ENCODE measurements at regions of chr20 and their contacts with region 1.

Region 1: GRCh38 chr20:2172305-2173175 is 70.9 kb downstream of the STK35 start:
- DNase-seq: peak; percentile 62
- H3K4me3 Mint-ChIP-seq: no peak overlapping the region
- H3K27ac Mint-ChIP-seq: no peak overlapping the region
- H3K4me1 Mint-ChIP-seq: peaks cover 6% of the 10 kb centered on the region
- H3K27me3 Mint-ChIP-seq: peaks cover 62% of the 10 kb centered on the region
- CTCF ChIP-seq: peak; percentile 95

Region 2: DNA sequence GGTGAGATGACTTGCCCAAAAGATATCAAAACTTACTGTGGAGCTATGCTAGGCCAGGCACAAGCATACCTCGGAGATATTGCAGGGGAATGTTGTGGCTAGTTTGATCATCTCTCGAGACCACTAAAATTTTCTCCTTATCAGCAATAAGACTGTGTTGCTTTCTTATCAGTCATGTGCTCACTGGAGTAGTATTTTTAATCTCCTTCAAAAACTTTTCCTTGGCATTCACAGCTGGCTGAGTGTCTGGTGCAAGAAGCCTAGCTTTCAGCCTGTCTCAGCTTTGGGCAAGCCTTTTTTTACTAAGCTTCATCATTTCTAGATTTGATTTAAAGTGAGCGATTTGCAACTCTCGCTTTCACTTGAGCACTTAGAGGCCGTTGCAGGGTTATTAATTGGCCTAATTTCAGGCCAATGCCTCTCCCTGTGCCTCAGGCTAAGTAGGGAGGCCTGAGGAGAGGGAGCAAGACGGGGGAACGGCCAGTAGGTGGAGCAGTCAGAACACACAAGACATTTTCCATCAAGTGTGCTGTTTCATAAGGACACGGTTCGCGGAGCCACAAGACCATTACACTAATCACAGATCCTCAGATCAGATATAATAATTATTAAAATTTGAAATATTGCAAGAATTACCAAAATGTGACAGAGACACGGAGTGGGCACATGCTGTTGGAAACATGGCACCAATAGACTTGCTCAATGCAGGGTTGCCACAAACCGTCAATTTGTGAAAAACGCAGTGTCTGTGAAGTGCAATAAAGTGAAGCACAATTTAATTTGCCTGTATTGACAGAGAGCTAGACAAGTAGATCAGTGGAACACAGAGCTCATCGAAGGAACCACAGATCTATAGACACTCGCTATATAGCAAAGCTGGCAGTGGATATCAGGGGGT is 408.2 kb before region 1 on chr20:
- CTCF ChIA-PET with region 1: interaction called, 35 read pairs
- POLR2A ChIA-PET with region 1: interaction called, 3 read pairs
- intact Hi-C with region 1: loop called (anchors 2 kb)
- DNase-seq: peak; percentile 84
- H3K4me3 Mint-ChIP-seq: no peak overlapping the region
- H3K27ac Mint-ChIP-seq: no peak overlapping the region
- H3K4me1 Mint-ChIP-seq: peaks cover 10% of the 10 kb centered on the region
- H3K27me3 Mint-ChIP-seq: no peaks in the 10 kb centered on the region
- CTCF ChIP-seq: peak; percentile 54

Region 3: DNA sequence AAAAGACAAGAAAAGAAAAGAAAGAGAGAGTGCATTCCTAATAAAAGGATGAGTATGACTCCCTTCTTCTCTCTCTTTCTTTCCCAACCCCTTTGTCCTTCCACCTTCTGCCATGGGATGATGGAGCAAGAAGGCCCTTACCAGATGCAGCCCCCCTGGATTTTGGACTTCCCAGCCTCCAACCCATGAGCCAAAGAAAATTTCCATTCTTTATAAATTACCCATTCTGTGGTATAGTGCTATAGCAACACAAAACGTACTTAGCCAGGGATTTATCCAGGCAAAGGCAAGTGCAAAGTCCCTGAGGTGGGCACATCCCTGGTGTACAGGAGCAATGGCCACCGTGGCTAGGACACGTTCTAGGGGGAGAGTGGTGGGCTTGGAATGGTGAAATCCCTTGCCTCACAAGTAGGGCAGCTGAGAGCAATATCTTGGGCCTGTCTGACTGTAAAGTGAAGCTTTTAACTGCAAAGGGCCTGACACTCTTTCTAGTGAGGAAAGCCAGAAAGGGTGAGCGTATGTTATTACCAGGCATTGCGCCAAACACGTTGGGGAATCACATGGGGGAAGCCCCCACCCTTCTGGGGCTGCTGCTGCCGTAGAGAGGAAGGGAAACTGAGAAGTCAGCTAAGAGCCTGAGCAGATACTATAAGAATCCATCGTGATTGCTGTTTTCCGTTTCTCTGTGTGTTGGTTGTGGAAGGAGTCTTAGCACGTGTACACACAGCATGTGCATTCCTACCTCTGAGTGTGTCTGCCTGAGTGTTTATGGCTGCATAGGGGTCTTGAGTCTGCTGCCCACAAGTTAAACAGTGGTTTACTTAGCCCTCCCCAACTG is 328.0 kb before region 1 on chr20:
- CTCF ChIA-PET with region 1: no interaction called
- POLR2A ChIA-PET with region 1: no interaction called
- intact Hi-C with region 1: no loop called
- DNase-seq: peak; percentile 5
- H3K4me3 Mint-ChIP-seq: no peak overlapping the region
- H3K27ac Mint-ChIP-seq: no peak overlapping the region
- H3K4me1 Mint-ChIP-seq: no peaks in the 10 kb centered on the region
- H3K27me3 Mint-ChIP-seq: no peaks in the 10 kb centered on the region
- CTCF ChIP-seq: no peak

Region 4: GRCh38 chr20:1870792-1871550 is 301.6 kb before region 1 on chr20:
- CTCF ChIA-PET with region 1: no interaction called
- POLR2A ChIA-PET with region 1: no interaction called
- intact Hi-C with region 1: no loop called
- DNase-seq: no peak
- H3K4me3 Mint-ChIP-seq: no peak overlapping the region
- H3K27ac Mint-ChIP-seq: no peak overlapping the region
- H3K4me1 Mint-ChIP-seq: no peaks in the 10 kb centered on the region
- H3K27me3 Mint-ChIP-seq: no peaks in the 10 kb centered on the region
- CTCF ChIP-seq: no peak

Region 5: GRCh38 chr20:1894951-1895673 is 277.4 kb before region 1 on chr20 and contains the start of gene SIRPA:
- CTCF ChIA-PET with region 1: no interaction called
- POLR2A ChIA-PET with region 1: no interaction called
- intact Hi-C with region 1: loop called (anchors 10 kb)
- DNase-seq: peak; percentile 64
- H3K4me3 Mint-ChIP-seq: peak within 1 kb of the TSS; percentile 79
- H3K27ac Mint-ChIP-seq: peak within 1 kb of the TSS; percentile 66
- H3K4me1 Mint-ChIP-seq: peaks cover 37% of the 10 kb centered on the region
- H3K27me3 Mint-ChIP-seq: no peaks in the 10 kb centered on the region
- CTCF ChIP-seq: no peak
- total RNA-seq, gene SIRPA: 18.0 and 23.6 TPM in 2 replicates

Region 6: GRCh38 chr20:1965520-1966351 is 206.8 kb before region 1 on chr20:
- CTCF ChIA-PET with region 1: interaction called, 95 read pairs
- POLR2A ChIA-PET with region 1: interaction called, 4 read pairs
- intact Hi-C with region 1: loop called (anchors 1 kb)
- DNase-seq: peak; percentile 73
- H3K4me3 Mint-ChIP-seq: no peak overlapping the region
- H3K27ac Mint-ChIP-seq: no peak overlapping the region
- H3K4me1 Mint-ChIP-seq: no peaks in the 10 kb centered on the region
- H3K27me3 Mint-ChIP-seq: peaks cover 58% of the 10 kb centered on the region
- CTCF ChIP-seq: peak; percentile 94

Region 7: GRCh38 chr20:2151858-2152281 is 20.7 kb before region 1 on chr20:
- CTCF ChIA-PET with region 1: interaction called, 19 read pairs
- POLR2A ChIA-PET with region 1: interaction called, 5 read pairs
- intact Hi-C with region 1: no loop called
- DNase-seq: peak; percentile 64
- H3K4me3 Mint-ChIP-seq: no peak overlapping the region
- H3K27ac Mint-ChIP-seq: peak overlapping the region; percentile 92
- H3K4me1 Mint-ChIP-seq: peaks cover 31% of the 10 kb centered on the region
- H3K27me3 Mint-ChIP-seq: no peaks in the 10 kb centered on the region
- CTCF ChIP-seq: no peak

Region 8: GRCh38 chr20:2162125-2162822 is 10.3 kb before region 1 on chr20:
- CTCF ChIA-PET with region 1: interaction called, 27 read pairs
- POLR2A ChIA-PET with region 1: interaction called, 5 read pairs
- intact Hi-C with region 1: no loop called
- DNase-seq: no peak
- H3K4me3 Mint-ChIP-seq: no peak overlapping the region
- H3K27ac Mint-ChIP-seq: no peak overlapping the region
- H3K4me1 Mint-ChIP-seq: peaks cover 11% of the 10 kb centered on the region
- H3K27me3 Mint-ChIP-seq: peaks cover 6% of the 10 kb centered on the region
- CTCF ChIP-seq: no peak